AG04449 (cell line): ENCODE measurements at regions of chr5 and their contacts with region 1.

Region 1: DNA sequence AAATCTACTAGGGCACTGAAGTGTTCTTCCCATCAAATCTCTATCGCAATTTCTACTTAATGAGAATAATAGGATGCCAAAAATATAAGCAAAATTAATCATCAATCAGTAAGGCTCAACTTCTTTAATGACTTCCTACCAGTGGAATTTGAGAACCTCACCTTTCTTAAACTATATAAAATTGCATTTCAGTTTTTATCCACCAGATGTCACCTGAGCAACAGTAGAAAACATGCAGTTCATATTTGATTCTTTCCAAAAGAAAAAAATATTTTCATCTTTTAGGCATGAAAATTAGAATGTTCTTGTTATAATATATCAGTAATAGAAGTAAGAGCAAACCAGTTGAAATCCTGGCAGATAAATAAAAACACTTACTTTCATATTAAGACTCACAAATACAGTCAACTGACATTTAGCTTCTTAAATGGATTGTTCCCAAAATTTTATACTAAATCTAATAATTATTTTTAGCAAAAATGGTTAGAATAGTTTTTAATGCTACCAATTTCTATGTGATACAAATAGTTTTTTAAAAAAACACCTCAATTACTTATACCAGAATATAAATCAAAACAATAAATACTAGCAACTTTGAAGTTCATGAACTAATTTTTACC is 13.4 kb upstream of the CCDC112 start:
- DNase-seq: no peak
- H3K4me3 ChIP-seq: no peak overlapping the region
- CTCF ChIP-seq: peak; percentile 32

Region 2: DNA sequence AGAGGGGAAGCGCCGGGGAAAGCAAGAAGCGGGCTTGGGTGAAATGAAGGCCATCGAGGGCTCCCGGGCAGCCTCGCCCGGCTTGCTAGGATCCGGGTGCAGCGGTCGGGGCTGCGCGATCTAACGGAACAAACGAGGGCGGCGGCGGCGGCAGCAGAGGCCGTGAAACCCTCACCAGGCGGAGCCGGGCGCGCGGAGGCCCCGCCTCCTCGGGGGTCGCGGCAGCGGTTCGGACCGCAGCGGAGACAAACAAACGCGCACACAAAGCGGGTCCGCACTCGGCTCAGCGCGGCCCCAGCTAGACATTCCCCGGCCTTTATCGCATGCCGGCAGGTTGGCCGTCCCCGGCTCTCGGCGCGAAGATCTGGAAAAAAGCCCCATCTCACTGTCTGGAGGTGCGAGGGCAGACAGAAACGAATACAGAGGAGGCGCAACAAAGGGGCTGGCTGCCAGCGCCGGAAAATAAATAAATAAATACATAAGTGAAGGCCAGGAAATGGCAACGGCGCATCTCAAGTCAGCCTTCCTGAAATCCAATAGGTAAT is 129.6 kb before region 1 on chr5:
- CTCF ChIA-PET with region 1: no interaction called
- POLR2A ChIA-PET with region 1: no interaction called
- DNase-seq: no peak
- H3K4me3 ChIP-seq: peak overlapping the region; percentile 50
- CTCF ChIP-seq: no peak

Region 3: GRCh38 chr5:115257981-115258380 is 51.9 kb before region 1 on chr5:
- CTCF ChIA-PET with region 1: no interaction called
- POLR2A ChIA-PET with region 1: no interaction called
- DNase-seq: no peak
- H3K4me3 ChIP-seq: no peak overlapping the region
- CTCF ChIP-seq: no peak

Region 4: GRCh38 chr5:115296124-115297022 is 13.5 kb before region 1 on chr5 and contains the start of gene CCDC112:
- CTCF ChIA-PET with region 1: interaction called, 24 read pairs
- POLR2A ChIA-PET with region 1: interaction called, 3 read pairs
- DNase-seq: no peak
- H3K4me3 ChIP-seq: peak within 1 kb of the TSS; percentile 79
- CTCF ChIP-seq: no peak

Region 5: GRCh38 chr5:115377468-115378217 is 67.8 kb after region 1 on chr5:
- CTCF ChIA-PET with region 1: interaction called, 25 read pairs
- POLR2A ChIA-PET with region 1: no interaction called
- DNase-seq: peak; percentile 93
- H3K4me3 ChIP-seq: peak overlapping the region; percentile 16
- CTCF ChIP-seq: peak; percentile 53

Region 6: GRCh38 chr5:115575167-115576070 is 265.6 kb after region 1 on chr5:
- CTCF ChIA-PET with region 1: interaction called, 83 read pairs
- POLR2A ChIA-PET with region 1: no interaction called
- DNase-seq: no peak
- H3K4me3 ChIP-seq: no peak overlapping the region
- CTCF ChIP-seq: no peak

Region 7: GRCh38 chr5:115594128-115595047 is 284.5 kb after region 1 on chr5:
- CTCF ChIA-PET with region 1: interaction called, 159 read pairs
- POLR2A ChIA-PET with region 1: no interaction called
- DNase-seq: no peak
- H3K4me3 ChIP-seq: no peak overlapping the region
- CTCF ChIP-seq: no peak

Region 8: GRCh38 chr5:115841382-115842088 is 531.7 kb after region 1 on chr5 and contains the starts of genes AP3S1 and ATG12:
- CTCF ChIA-PET with region 1: interaction called, 27 read pairs
- POLR2A ChIA-PET with region 1: no interaction called
- DNase-seq: peak; percentile 46
- H3K4me3 ChIP-seq: peak within 1 kb of the TSS; percentile 81
- CTCF ChIP-seq: no peak

Region 9: DNA sequence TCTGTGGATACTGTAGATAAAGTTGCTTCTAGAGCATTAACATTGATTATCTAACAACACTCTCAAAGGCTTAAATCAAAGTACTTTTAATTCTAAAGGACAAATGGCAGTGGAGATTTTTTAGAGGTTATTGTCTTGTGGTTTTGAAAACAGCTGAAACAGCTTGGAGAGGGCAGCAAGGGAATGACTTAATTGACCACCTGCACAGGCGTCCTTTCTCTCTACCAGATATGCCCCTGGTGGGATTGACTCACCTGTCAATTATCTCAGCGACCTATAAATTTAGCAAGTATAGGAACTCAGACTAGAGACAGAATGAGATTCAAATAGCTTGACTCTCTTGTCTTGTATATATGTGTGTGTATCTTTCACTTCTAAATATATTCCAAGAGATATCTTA is 736.0 kb after region 1 on chr5:
- CTCF ChIA-PET with region 1: no interaction called
- POLR2A ChIA-PET with region 1: no interaction called
- DNase-seq: no peak
- H3K4me3 ChIP-seq: no peak overlapping the region
- CTCF ChIP-seq: no peak